H1 (cell line): ENCODE measurements at regions of chr17 and their contacts with region 1.

Region 1: GRCh38 chr17:65198653-65199382 is 61.6 kb downstream of the RGS9 start:
- DNase-seq: peak in 1 of 2 experiments; percentile 55
- H3K4me3 ChIP-seq: no peak overlapping the region
- H3K27ac ChIP-seq: no peak overlapping the region
- H3K4me1 ChIP-seq: no peaks in the 10 kb centered on the region; a peak in 1 of 7 replicates
- H3K27me3 ChIP-seq: no peaks in the 10 kb centered on the region
- CTCF ChIP-seq: peak in 2 of 3 experiments; percentile 62 to 70; a peak in 3 of 4 replicates
- EP300 ChIP-seq: no peak
- POLR2A ChIP-seq: no peak
- RAD21 ChIP-seq: peak; percentile 87

Region 2: GRCh38 chr17:65093930-65094329 is 104.9 kb before region 1 on chr17:
- CTCF ChIA-PET with region 1: interaction called, 10 read pairs
- POLR2A ChIA-PET with region 1: no interaction called
- DNase-seq: no peak
- H3K4me3 ChIP-seq: no peak overlapping the region
- H3K27ac ChIP-seq: no peak overlapping the region
- H3K4me1 ChIP-seq: no peaks in the 10 kb centered on the region
- H3K27me3 ChIP-seq: no peaks in the 10 kb centered on the region
- CTCF ChIP-seq: peak in 2 of 3 experiments; percentile 32 to 33; a peak in 2 of 4 replicates
- EP300 ChIP-seq: no peak
- POLR2A ChIP-seq: no peak
- RAD21 ChIP-seq: peak in 1 of 2 experiments; percentile 27; a peak in 1 of 4 replicates

Region 3: DNA sequence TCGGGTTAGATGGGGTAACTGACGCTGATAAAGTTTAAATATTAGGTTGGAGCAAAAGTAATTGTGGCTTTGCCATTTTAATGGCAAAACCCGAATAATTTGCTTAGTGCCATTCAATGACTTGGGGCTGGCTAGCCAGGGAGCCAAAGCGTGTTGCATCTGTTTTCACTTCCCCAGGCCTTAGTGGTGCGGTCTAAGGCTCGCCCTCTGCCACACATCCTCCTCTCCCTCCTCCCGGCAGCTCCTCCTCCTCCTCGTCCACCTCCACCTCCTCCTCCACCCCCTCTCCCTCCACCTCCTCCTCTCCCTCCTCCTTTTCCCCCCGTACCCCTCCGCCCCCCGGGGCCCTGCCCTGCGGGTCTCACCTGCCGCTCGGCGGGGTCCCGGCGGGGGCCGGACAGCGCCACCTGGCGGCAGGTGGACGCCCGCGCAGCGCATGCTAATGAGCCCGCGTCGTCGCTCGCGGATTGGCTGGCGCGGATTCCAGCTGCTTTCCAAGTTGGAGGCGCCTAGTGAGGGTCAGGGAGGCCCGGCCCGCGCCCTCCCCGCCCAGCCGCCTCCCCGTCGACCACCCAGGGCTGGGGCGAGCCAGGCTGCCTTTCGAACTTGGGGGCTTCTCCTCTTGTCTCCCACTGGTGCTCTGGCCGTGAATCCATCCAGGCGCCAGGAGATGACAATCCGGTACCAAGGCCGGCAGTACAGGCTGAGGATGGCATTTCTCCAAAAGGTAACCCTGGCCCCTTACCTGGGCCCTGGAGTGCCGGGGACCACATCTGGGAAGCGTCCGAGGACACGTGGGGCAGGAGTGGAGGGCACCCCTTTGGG is 98.3 kb before region 1 on chr17:
- CTCF ChIA-PET with region 1: interaction called, 13 read pairs
- POLR2A ChIA-PET with region 1: no interaction called
- DNase-seq: peak; percentile 63 to 93
- H3K4me3 ChIP-seq: peak overlapping the region; percentile 38 to 66 (median 56)
- H3K27ac ChIP-seq: no peak overlapping the region
- H3K4me1 ChIP-seq: peaks cover 0 to 6% (median 3%) of the 10 kb centered on the region in 4 experiments; a peak in 2 of 7 replicates
- H3K27me3 ChIP-seq: no peaks in the 10 kb centered on the region
- CTCF ChIP-seq: peak; percentile 75 to 86 (median 82)
- EP300 ChIP-seq: 0 out of 3 replicates have a peak, but pooled peaks of 1 of the 2 experiments have one; percentile 35
- POLR2A ChIP-seq: peak in 1 of 2 experiments; percentile 19; a peak in 1 of 3 replicates
- RAD21 ChIP-seq: peak; percentile 55 to 78

Region 4: DNA sequence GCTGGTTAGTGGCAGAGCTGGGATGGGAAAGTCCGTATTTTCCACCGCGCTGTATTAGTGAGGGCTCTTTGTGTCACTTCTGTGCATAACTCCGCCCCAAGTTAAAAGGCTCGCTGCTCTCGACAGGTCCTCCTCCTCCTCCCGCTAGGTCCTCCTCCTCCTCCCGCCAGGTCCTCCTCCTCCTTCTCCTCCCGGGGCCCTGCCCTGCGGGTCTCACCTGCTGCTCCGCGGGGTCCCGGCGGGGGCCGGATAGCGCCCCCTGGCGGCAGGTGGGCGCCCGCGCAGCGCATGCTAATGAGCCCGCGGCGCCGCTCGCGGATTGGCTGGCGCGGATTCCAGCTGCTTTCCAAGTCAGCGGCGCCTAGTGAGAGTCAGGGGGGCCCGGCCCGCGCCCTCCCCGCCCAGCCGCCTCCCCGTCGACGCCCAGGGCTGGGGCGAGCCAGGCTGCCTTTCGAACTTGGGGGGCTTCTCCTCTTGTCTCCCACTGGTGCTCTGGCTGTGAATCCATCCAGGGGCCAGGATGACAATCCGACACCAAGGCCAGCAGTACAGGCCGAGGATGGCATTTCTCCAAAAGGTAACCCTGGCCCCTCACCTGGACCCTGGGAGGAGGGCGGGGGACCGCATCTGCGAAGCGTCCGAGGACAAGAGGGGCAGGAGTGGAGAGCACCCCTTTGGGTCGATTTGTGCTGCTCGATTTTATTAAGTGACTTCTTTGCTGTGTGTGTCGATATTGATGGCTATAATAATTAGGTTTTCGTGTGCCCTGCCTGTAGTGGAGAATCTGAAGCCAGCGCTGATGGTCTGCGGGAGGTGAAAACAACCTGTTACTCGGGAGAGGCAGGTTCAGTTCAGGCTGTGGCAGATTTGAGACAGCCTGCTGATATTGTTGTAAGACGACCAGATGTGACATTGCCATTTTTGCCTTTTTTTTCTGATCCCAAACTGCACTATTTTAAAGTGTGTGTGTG is 61.5 kb before region 1 on chr17 and contains the start of gene RGS9:
- CTCF ChIA-PET with region 1: interaction called, 16 read pairs
- POLR2A ChIA-PET with region 1: no interaction called
- DNase-seq: peak; percentile 78 to 93
- H3K4me3 ChIP-seq: peak within 1 kb of the TSS; percentile 30 to 58 (median 38)
- H3K27ac ChIP-seq: no peak within 1 kb of the TSS
- H3K4me1 ChIP-seq: peaks cover 0 to 5% (median 2%) of the 10 kb centered on the region in 4 experiments; a peak in 4 of 7 replicates
- H3K27me3 ChIP-seq: peaks cover 0 to 14% (median 12%) of the 10 kb centered on the region in 4 experiments; a peak in 6 of 7 replicates
- CTCF ChIP-seq: peak; percentile 81 to 90 (median 83)
- EP300 ChIP-seq: peak in 1 of 2 experiments; percentile 85; a peak in 1 of 3 replicates
- POLR2A ChIP-seq: no peak
- RAD21 ChIP-seq: peak; percentile 60 to 76
- total RNA-seq, gene RGS9: 14.3 and 20.5 TPM in 2 replicates

Region 5: GRCh38 chr17:65278050-65278819 is 79.4 kb after region 1 on chr17:
- CTCF ChIA-PET with region 1: no interaction called
- POLR2A ChIA-PET with region 1: no interaction called
- DNase-seq: peak in 1 of 2 experiments; percentile 78
- H3K4me3 ChIP-seq: no peak overlapping the region
- H3K27ac ChIP-seq: no peak overlapping the region
- H3K4me1 ChIP-seq: peaks cover 0 to 6% (median 0%) of the 10 kb centered on the region in 4 experiments; a peak in 2 of 7 replicates
- H3K27me3 ChIP-seq: no peaks in the 10 kb centered on the region
- CTCF ChIP-seq: peak; percentile 84 to 92 (median 88)
- EP300 ChIP-seq: no peak
- POLR2A ChIP-seq: no peak
- RAD21 ChIP-seq: peak; percentile 96 to 97